CD4-positive, alpha-beta memory T cell (primary cell): ENCODE measurements at regions of chr14 and their contacts with region 1.

Region 1: DNA sequence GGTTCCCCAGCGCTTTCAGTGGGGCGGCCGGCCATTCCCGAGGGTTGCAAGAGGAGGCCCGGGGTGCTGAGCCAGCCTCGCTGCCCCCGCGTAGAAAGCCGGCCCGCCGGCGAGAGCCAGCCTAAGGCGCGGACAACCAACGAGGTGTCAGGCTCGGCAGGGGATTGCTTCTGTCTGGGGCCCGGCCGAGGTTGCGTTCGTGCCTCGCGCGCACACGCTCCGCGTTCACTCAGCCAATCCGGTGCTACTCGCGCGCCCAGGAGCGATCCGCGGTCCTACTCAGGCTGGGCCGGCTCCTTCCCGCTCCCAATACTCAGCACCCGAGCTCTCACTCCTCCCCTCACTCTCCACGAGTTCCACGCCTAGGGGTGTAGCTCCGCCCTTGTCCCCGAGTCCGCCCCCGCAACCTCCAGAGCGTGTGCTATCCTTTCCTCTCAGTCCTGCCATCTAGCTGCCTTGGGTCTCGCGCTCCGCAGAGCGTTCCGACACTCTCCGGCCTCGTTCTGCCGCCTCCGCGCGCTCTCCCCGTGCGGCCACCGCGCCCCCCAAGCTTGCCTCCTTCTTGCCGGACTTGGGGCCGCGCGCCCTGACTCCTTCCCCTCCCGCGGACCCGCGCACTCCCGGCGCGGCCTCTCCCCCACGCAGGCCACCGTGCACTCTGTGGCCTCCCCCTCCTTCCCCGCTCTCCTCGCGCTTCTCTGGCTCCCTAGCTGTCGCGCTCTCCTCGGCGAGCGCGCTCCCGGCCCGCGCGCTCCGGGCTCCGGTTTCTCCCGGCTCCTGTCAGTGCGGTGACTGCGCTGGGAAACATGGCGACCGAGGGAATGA is at the start of gene GPHN:
- DNase-seq: peak; percentile 85 to 92 (median 89)
- H3K4me3 ChIP-seq: peak within 1 kb of the TSS; percentile 48 to 79
- H3K4me3 Mint-ChIP-seq: peak within 1 kb of the TSS; percentile 98 to 100 (median 99)
- H3K27ac ChIP-seq: peak within 1 kb of the TSS; percentile 73
- H3K27ac Mint-ChIP-seq: peak within 1 kb of the TSS; percentile 92 to 98 (median 95)
- H3K4me1 ChIP-seq: peaks cover 40% of the 10 kb centered on the region
- H3K4me1 Mint-ChIP-seq: peaks cover 18 to 53% (median 32%) of the 10 kb centered on the region in 4 donors
- H3K27me3 ChIP-seq: no peaks in the 10 kb centered on the region
- H3K27me3 Mint-ChIP-seq: no peaks in the 10 kb centered on the region
- total RNA-seq, gene GPHN: 15.5 to 18.8 TPM

Region 2: GRCh38 chr14:65102441-65103149 is 1405.3 kb before region 1 on chr14 and contains the start of gene MAX:
- CTCF ChIA-PET with region 1: no interaction called
- POLR2A ChIA-PET with region 1: interaction called, 4 read pairs
- intact Hi-C with region 1: loop called (anchors 1 kb)
- DNase-seq: peak; percentile 98 to 100 (median 100)
- H3K4me3 ChIP-seq: peak within 1 kb of the TSS; percentile 77 to 100
- H3K4me3 Mint-ChIP-seq: peak within 1 kb of the TSS; percentile 91 to 100 (median 96)
- H3K27ac ChIP-seq: peak within 1 kb of the TSS; percentile 96
- H3K27ac Mint-ChIP-seq: peak within 1 kb of the TSS; percentile 92 to 99 (median 97)
- H3K4me1 ChIP-seq: peaks cover 41% of the 10 kb centered on the region
- H3K4me1 Mint-ChIP-seq: peaks cover 24 to 49% (median 35%) of the 10 kb centered on the region in 4 donors
- H3K27me3 ChIP-seq: no peaks in the 10 kb centered on the region
- H3K27me3 Mint-ChIP-seq: peaks cover 2 to 3% of the 10 kb centered on the region in 2 donors
- total RNA-seq, gene MAX: 188 to 212 TPM

Region 3: DNA sequence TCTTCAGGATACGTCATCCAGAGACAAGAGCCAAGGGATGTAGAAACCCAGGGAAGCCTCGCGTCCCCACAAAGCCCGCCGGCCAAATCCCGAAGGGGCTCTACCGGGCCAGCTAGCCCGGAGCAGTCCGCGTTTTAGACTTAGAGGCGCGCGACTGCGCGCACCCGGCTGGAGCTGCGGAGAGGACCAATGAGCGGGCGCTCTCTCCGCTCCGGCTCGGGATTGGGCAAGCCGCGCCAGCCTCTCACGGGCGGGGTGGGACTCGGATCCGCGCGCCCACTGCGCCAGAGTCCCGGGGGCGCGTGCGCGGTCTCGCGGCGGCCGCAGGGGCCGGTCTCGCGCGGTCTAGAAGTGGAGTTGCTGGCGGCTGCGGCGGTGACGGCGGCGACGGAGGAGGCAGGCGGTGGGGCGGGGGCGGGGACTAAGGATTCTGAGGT is 733.1 kb after region 1 on chr14:
- CTCF ChIA-PET with region 1: no interaction called
- POLR2A ChIA-PET with region 1: interaction called, 6 read pairs
- intact Hi-C with region 1: loop called (anchors 1 kb)
- DNase-seq: peak; percentile 90 to 92 (median 91)
- H3K4me3 ChIP-seq: peak overlapping the region; percentile 73 to 90
- H3K4me3 Mint-ChIP-seq: peak overlapping the region; percentile 81 to 94 (median 92)
- H3K27ac ChIP-seq: peak overlapping the region; percentile 61
- H3K27ac Mint-ChIP-seq: peak overlapping the region; percentile 83 to 93 (median 88)
- H3K4me1 ChIP-seq: peaks cover 17% of the 10 kb centered on the region
- H3K4me1 Mint-ChIP-seq: peaks cover 7 to 32% (median 18%) of the 10 kb centered on the region in 4 donors
- H3K27me3 ChIP-seq: no peaks in the 10 kb centered on the region
- H3K27me3 Mint-ChIP-seq: no peaks in the 10 kb centered on the region